ENCODE measurements at regions of chr5 and their contacts with region 1.

Region 1: GRCh38 chr5:76555114-76555513 is 68.1 kb downstream of the F2RL2 start:
- DNase-seq: no peak
- H3K4me3 Mint-ChIP-seq: no peak overlapping the region
- H3K27ac Mint-ChIP-seq: no peak overlapping the region
- H3K4me1 Mint-ChIP-seq: peaks cover 24% of the 10 kb centered on the region
- H3K27me3 Mint-ChIP-seq: no peaks in the 10 kb centered on the region

Region 2: GRCh38 chr5:76571559-76571958 is 16.4 kb after region 1 on chr5:
- intact Hi-C with region 1: loop called (anchors 2 kb)
- DNase-seq: no peak
- H3K4me3 Mint-ChIP-seq: no peak overlapping the region
- H3K27ac Mint-ChIP-seq: no peak overlapping the region
- H3K4me1 Mint-ChIP-seq: peaks cover 2% of the 10 kb centered on the region
- H3K27me3 Mint-ChIP-seq: no peaks in the 10 kb centered on the region

Region 3: DNA sequence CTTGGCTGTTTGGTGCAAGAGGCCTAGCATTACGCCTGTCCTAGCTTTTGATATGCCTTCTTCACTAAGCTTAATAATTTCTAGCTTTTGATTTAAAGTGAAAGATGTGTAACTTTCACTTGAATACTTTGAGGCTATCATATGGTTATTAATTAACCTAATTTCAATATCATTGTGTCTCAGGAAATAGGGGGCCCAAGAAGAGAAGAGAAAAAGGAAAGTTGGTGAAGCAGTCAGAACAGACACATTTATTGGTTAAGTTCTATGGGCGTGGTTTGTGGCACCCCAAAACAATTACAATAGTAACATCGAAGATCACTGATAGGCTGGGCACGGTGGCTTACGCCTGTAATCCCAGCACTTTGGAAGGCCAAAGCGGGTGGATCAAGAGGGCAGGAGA is 109.0 kb after region 1 on chr5:
- intact Hi-C with region 1: no loop called
- DNase-seq: no peak
- H3K4me3 Mint-ChIP-seq: no peak overlapping the region
- H3K27ac Mint-ChIP-seq: no peak overlapping the region
- H3K4me1 Mint-ChIP-seq: no peaks in the 10 kb centered on the region
- H3K27me3 Mint-ChIP-seq: no peaks in the 10 kb centered on the region

Measured in activated T-helper 2 cell treated with anti-CD3 and anti-CD28 coated beads, Interferon-gamma antibody, Interleukin-2, Interleukin-4, amounts not matched to agents 10 μg/mL and 5 μg/mL and 100 μg/mL, durations not matched to agents 14 hours and 24 hours and 36 hours (primary cell).